ENCODE measurements at regions of chr19 and their contacts with region 1.

Region 1: DNA sequence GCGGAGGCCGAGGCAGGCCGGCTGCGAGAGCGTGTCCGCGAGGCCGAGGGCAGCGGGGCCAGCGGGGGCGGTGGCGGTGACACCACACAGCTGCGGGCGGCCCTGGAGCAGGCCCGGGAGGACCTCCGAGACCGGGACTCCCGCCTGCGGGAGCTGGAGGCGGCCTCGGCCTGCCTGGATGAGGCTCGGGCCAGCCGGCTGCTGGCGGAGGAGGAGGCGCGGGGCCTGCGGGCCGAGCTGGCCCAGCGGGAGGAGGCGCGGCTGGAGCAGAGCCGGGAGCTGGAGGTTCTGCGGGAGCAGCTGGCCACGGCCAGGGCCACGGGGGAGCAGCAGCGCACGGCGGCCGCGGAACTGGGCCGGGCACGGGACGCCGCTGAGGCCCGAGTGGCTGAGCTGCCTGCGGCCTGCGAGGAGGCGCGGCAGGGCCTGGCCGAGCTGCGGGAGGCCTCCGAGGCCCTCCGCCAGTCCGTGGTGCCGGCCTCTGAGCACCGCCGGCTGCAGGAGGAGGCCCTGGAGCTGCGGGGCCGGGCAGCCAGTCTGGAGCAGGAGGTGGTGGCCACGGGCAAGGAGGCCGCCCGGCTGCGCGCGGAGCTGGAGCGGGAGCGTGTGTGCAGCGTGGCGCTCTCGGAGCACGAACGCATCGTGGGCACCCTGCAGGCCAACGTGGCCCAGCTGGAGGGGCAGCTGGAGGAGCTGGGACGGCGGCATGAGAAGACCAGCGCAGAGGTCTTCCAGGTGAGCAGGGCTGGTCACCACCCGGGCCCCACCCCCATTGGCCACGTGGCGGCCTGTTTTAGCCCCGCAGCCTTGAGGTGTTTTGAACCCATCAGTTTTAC is 11.7 kb upstream of the EBI3 start:
- DNase-seq: no peak
- H3K4me3 ChIP-seq: no peak overlapping the region
- H3K27ac ChIP-seq: no peak overlapping the region
- H3K4me1 ChIP-seq: no peaks in the 10 kb centered on the region
- H3K27me3 ChIP-seq: no peaks in the 10 kb centered on the region
- CTCF ChIP-seq: no peak

Region 2: GRCh38 chr19:4272894-4273293 is 55.2 kb after region 1 on chr19:
- CTCF ChIA-PET with region 1: no interaction called
- dilution Hi-C with region 1: loop called (anchors 5 kb)
- in situ Hi-C with region 1: no loop called
- intact Hi-C with region 1: no loop called
- DNase-seq: no peak
- H3K4me3 ChIP-seq: no peak overlapping the region
- H3K27ac ChIP-seq: no peak overlapping the region
- H3K4me1 ChIP-seq: no peaks in the 10 kb centered on the region
- H3K27me3 ChIP-seq: no peaks in the 10 kb centered on the region
- CTCF ChIP-seq: no peak

Measured in mammary epithelial cell (primary cell).